ENCODE measurements at regions of chr1 and their contacts with region 1.

Region 1: DNA sequence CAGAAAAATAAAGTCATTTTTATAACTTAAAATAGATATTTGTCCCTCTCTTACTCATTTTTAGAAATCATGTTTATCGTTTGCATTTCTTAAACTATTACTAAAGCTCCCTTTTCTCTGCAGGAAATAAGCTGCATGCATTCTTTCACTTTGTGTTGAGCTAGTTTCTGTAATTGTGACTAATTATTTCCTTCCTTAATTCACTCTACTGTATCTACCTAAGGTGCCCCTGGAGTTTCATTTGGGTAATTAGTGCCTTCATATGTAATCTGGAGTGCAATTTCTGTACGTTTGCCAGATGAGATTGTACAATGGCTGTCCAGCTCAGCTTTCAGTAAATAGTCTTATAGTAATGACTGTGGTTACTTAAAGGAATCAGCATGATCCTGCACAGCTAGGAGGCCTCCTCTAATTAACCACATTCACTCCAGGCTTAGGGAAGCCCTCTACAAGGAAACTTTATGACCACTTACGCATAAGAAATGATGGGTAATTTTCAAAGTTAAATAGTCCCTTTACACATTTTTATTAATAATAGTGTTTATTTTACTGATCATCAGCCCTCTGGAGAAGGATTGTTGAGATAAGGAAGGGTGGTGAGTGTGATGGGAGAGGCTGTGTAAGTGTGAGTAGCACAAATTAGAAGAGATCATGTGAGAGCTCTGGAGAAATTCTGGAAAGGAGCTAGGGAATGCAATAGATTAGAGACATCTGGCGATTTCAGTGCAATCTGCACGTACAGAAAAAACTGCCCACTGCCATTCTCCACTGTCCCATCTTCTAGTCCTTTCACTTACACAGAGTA is 86.8 kb downstream of the LRRC8C start:
- DNase-seq: no peak
- ATAC-seq: peak; percentile 77
- H3K4me3 ChIP-seq: no peak overlapping the region
- H3K4me3 Mint-ChIP-seq: peak overlapping the region in 9 of 10 donors; percentile 1 to 82 (median 48)
- H3K27ac ChIP-seq: peak overlapping the region; percentile 10
- H3K27ac Mint-ChIP-seq: peak overlapping the region; percentile 1 to 97 (median 66)
- H3K4me1 ChIP-seq: peaks cover 27 to 57% of the 10 kb centered on the region in 2 donors
- H3K4me1 Mint-ChIP-seq: peaks cover 34 to 82% (median 75%) of the 10 kb centered on the region in 7 donors
- H3K27me3 ChIP-seq: no peaks in the 10 kb centered on the region
- H3K27me3 Mint-ChIP-seq: no peaks in the 10 kb centered on the region

Region 2: GRCh38 chr1:87757676-87758075 is 1962.0 kb before region 1 on chr1:
- CTCF ChIA-PET with region 1: no interaction called
- POLR2A ChIA-PET with region 1: no interaction called
- intact Hi-C with region 1: no loop called
- DNase-seq: no peak
- ATAC-seq: no peak
- H3K4me3 ChIP-seq: no peak overlapping the region
- H3K4me3 Mint-ChIP-seq: no peak overlapping the region
- H3K27ac ChIP-seq: no peak overlapping the region
- H3K27ac Mint-ChIP-seq: no peak overlapping the region
- H3K4me1 ChIP-seq: no peaks in the 10 kb centered on the region
- H3K4me1 Mint-ChIP-seq: peaks cover 0 to 4% (median 0%) of the 10 kb centered on the region in 7 donors
- H3K27me3 ChIP-seq: no peaks in the 10 kb centered on the region
- H3K27me3 Mint-ChIP-seq: peaks cover 0 to 9% (median 5%) of the 10 kb centered on the region in 5 donors

Region 3: DNA sequence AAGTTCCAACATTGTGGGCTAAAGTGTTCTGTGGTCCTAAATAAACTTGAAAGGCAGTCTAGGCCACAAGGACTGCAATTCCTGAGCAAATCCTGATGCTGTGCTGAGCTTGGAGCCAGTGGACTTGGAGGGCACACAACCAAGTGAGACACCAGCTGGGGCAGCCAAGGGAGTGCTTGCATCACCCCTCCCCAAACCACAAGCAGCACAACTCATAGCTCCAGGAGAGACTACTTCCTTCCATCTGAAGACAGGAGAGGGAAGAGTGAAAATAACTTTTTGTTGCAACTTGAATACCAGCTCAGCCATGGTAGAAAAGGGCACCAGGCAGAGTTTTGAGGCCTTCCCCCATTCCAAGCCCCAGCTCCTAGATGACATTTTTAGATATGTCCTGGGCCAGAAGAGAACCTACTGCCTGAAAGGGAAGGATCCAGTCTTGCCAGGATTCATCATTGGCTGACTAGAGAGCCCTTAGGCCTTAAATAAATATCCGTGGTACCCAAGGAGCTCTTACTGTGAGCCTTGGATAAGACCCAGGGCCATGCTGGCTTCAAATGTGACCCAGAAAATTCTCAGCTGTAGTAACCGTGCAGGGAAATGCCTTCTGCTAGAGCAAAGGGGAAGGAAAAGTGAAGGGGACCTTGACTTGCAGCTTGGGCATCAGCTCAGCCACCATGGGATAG is 230.5 kb before region 1 on chr1:
- CTCF ChIA-PET with region 1: no interaction called
- POLR2A ChIA-PET with region 1: no interaction called
- intact Hi-C with region 1: loop called in 1 of 2 experiments (anchors 5 kb)
- DNase-seq: no peak
- ATAC-seq: peak; percentile 60
- H3K4me3 ChIP-seq: no peak overlapping the region
- H3K4me3 Mint-ChIP-seq: peak overlapping the region in 1 of 10 donors; percentile 33
- H3K27ac ChIP-seq: no peak overlapping the region
- H3K27ac Mint-ChIP-seq: peak overlapping the region in 2 of 9 donors; percentile 24 to 63
- H3K4me1 ChIP-seq: no peaks in the 10 kb centered on the region
- H3K4me1 Mint-ChIP-seq: peaks cover 3 to 27% (median 18%) of the 10 kb centered on the region in 7 donors
- H3K27me3 ChIP-seq: no peaks in the 10 kb centered on the region
- H3K27me3 Mint-ChIP-seq: peaks cover 0 to 10% (median 0%) of the 10 kb centered on the region in 5 donors

Region 4: GRCh38 chr1:89698624-89699023 is 21.1 kb before region 1 on chr1:
- CTCF ChIA-PET with region 1: interaction called, 3 read pairs
- POLR2A ChIA-PET with region 1: interaction called, 3 read pairs
- intact Hi-C with region 1: loop called in 1 of 2 experiments (anchors 1 kb)
- DNase-seq: peak in 2 of 9 donors; percentile 21 to 28
- ATAC-seq: peak; percentile 59
- H3K4me3 ChIP-seq: peak overlapping the region; percentile 15
- H3K4me3 Mint-ChIP-seq: peak overlapping the region in 9 of 10 donors; percentile 52 to 82 (median 65)
- H3K27ac ChIP-seq: peak overlapping the region; percentile 34
- H3K27ac Mint-ChIP-seq: peak overlapping the region; percentile 73 to 89 (median 87)
- H3K4me1 ChIP-seq: peaks cover 45 to 67% of the 10 kb centered on the region in 2 donors
- H3K4me1 Mint-ChIP-seq: peaks cover 50 to 93% (median 82%) of the 10 kb centered on the region in 7 donors
- H3K27me3 ChIP-seq: no peaks in the 10 kb centered on the region
- H3K27me3 Mint-ChIP-seq: no peaks in the 10 kb centered on the region

Region 5: DNA sequence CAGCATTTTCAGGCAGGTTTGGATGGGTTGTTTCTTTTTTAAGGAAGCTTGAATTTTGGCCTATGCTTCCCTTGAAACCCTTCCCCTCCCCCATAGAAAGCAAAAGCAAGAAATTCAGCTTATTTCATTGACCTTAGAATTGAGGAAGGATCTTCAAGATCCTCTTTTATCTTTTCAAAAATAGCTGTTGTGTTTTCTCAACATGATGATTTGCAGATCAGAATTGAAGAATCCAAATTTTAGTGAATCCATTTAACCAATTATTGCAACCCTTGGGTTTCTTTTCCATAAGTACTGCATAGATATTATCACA is 13.0 kb before region 1 on chr1:
- CTCF ChIA-PET with region 1: interaction called, 5 read pairs
- POLR2A ChIA-PET with region 1: interaction called, 5 read pairs
- intact Hi-C with region 1: loop called (anchors 1 kb)
- DNase-seq: no peak
- ATAC-seq: no peak
- H3K4me3 ChIP-seq: no peak overlapping the region
- H3K4me3 Mint-ChIP-seq: no peak overlapping the region
- H3K27ac ChIP-seq: no peak overlapping the region
- H3K27ac Mint-ChIP-seq: peak overlapping the region in 5 of 9 donors; percentile 2 to 82 (median 32)
- H3K4me1 ChIP-seq: peaks cover 4 to 5% of the 10 kb centered on the region in 2 donors
- H3K4me1 Mint-ChIP-seq: peaks cover 22 to 57% (median 40%) of the 10 kb centered on the region in 7 donors
- H3K27me3 ChIP-seq: no peaks in the 10 kb centered on the region
- H3K27me3 Mint-ChIP-seq: no peaks in the 10 kb centered on the region

Region 6: GRCh38 chr1:89739013-89739843 is 19.5 kb after region 1 on chr1:
- CTCF ChIA-PET with region 1: no interaction called
- POLR2A ChIA-PET with region 1: no interaction called
- intact Hi-C with region 1: loop called in 1 of 2 experiments (anchors 1 kb)
- DNase-seq: peak in 1 of 9 donors; percentile 60
- ATAC-seq: peak; percentile 51
- H3K4me3 ChIP-seq: no peak overlapping the region
- H3K4me3 Mint-ChIP-seq: peak overlapping the region in 2 of 10 donors; percentile 1 to 83
- H3K27ac ChIP-seq: no peak overlapping the region
- H3K27ac Mint-ChIP-seq: peak overlapping the region in 8 of 9 donors; percentile 5 to 92 (median 42)
- H3K4me1 ChIP-seq: peaks cover 5 to 33% of the 10 kb centered on the region in 2 donors
- H3K4me1 Mint-ChIP-seq: peaks cover 0 to 43% (median 20%) of the 10 kb centered on the region in 7 donors
- H3K27me3 ChIP-seq: no peaks in the 10 kb centered on the region
- H3K27me3 Mint-ChIP-seq: no peaks in the 10 kb centered on the region

Region 7: GRCh38 chr1:89757532-89757931 is 37.8 kb after region 1 on chr1:
- CTCF ChIA-PET with region 1: interaction called, 18 read pairs
- POLR2A ChIA-PET with region 1: interaction called, 5 read pairs
- intact Hi-C with region 1: loop called (anchors 1 to 5 kb)
- DNase-seq: peak in 8 of 9 donors; percentile 30 to 59 (median 51)
- ATAC-seq: peak; percentile 68
- H3K4me3 ChIP-seq: peak overlapping the region; percentile 48
- H3K4me3 Mint-ChIP-seq: peak overlapping the region; percentile 73 to 87 (median 83)
- H3K27ac ChIP-seq: peak overlapping the region; percentile 62
- H3K27ac Mint-ChIP-seq: peak overlapping the region; percentile 88 to 97 (median 95)
- H3K4me1 ChIP-seq: peaks cover 37 to 81% of the 10 kb centered on the region in 2 donors
- H3K4me1 Mint-ChIP-seq: peaks cover 61 to 97% (median 88%) of the 10 kb centered on the region in 7 donors
- H3K27me3 ChIP-seq: no peaks in the 10 kb centered on the region
- H3K27me3 Mint-ChIP-seq: no peaks in the 10 kb centered on the region

Region 8: DNA sequence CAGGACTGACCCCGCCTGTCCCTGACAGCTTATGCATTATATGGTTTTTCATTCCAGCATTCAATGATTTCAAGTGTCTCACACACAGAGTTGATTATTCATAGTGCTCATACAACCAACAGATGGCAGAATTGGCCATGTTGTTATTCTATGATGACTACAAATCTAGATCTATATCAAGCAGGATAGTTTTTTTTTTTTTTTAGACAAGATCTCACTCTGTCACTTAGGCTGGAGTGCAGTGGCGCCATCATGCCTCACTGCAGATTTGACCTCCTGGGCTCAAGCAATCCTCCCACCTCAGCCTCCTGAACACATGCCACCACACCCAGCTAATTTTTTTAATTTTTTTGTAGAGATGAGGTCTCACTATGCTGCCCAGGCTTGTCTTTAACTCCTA is 61.0 kb after region 1 on chr1:
- CTCF ChIA-PET with region 1: no interaction called
- POLR2A ChIA-PET with region 1: no interaction called
- intact Hi-C with region 1: no loop called
- DNase-seq: peak in 5 of 9 donors; percentile 38 to 56 (median 41)
- ATAC-seq: peak; percentile 80
- H3K4me3 ChIP-seq: no peak overlapping the region
- H3K4me3 Mint-ChIP-seq: peak overlapping the region in 2 of 10 donors; percentile 5 to 26
- H3K27ac ChIP-seq: no peak overlapping the region
- H3K27ac Mint-ChIP-seq: peak overlapping the region in 2 of 9 donors; percentile 34 to 53
- H3K4me1 ChIP-seq: peaks cover 0 to 13% of the 10 kb centered on the region in 2 donors
- H3K4me1 Mint-ChIP-seq: peaks cover 17 to 30% (median 27%) of the 10 kb centered on the region in 7 donors
- H3K27me3 ChIP-seq: no peaks in the 10 kb centered on the region
- H3K27me3 Mint-ChIP-seq: no peaks in the 10 kb centered on the region

Region 9: GRCh38 chr1:89855413-89856123 is 135.9 kb after region 1 on chr1:
- CTCF ChIA-PET with region 1: no interaction called
- POLR2A ChIA-PET with region 1: no interaction called
- intact Hi-C with region 1: no loop called
- DNase-seq: peak in 7 of 9 donors; percentile 45 to 80 (median 67)
- ATAC-seq: peak; percentile 91
- H3K4me3 ChIP-seq: peak overlapping the region; percentile 2
- H3K4me3 Mint-ChIP-seq: peak overlapping the region in 5 of 10 donors; percentile 35 to 87 (median 53)
- H3K27ac ChIP-seq: peak overlapping the region; percentile 72
- H3K27ac Mint-ChIP-seq: no peak overlapping the region
- H3K4me1 ChIP-seq: peaks cover 21 to 29% of the 10 kb centered on the region in 2 donors
- H3K4me1 Mint-ChIP-seq: peaks cover 6 to 31% (median 8%) of the 10 kb centered on the region in 7 donors
- H3K27me3 ChIP-seq: no peaks in the 10 kb centered on the region
- H3K27me3 Mint-ChIP-seq: no peaks in the 10 kb centered on the region